Activated CD4-positive, alpha-beta T cell treated with anti-CD3 and anti-CD28 coated beads for 36 hours (primary cell): ENCODE measurements at regions of chr10 and their contacts with region 1.

Region 1: DNA sequence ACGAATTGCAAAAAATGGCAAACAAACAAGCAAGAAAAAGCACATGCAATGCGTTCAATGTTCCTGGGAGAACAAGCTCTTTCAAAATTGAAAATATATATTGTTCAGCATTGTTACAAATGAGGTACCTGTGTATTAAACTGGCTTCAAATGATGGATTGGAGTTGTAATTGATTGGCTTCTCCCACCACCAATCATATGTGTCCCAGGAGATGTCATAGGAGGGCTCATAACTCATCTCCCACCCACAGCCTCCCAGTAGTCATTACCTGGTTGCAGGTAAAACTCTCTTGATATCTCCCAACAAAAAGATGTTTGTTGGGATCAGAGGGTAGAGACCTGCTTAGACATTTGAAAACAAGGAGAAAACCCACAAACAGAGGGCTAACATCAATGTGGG is 302.9 kb downstream of the BAMBI start:
- DNase-seq: no peak
- ATAC-seq: no peak
- H3K4me3 Mint-ChIP-seq: no peak overlapping the region
- H3K27ac Mint-ChIP-seq: no peak overlapping the region
- H3K4me1 Mint-ChIP-seq: no peaks in the 10 kb centered on the region
- H3K27me3 Mint-ChIP-seq: peaks cover 5% of the 10 kb centered on the region

Region 2: GRCh38 chr10:28997739-28998138 is 17.5 kb after region 1 on chr10:
- CTCF ChIA-PET with region 1: interaction called, 11 read pairs
- POLR2A ChIA-PET with region 1: no interaction called
- intact Hi-C with region 1: no loop called
- DNase-seq: no peak
- ATAC-seq: no peak
- H3K4me3 Mint-ChIP-seq: no peak overlapping the region
- H3K27ac Mint-ChIP-seq: no peak overlapping the region
- H3K4me1 Mint-ChIP-seq: peaks cover 5% of the 10 kb centered on the region
- H3K27me3 Mint-ChIP-seq: peaks cover 6% of the 10 kb centered on the region